ENCODE measurements at regions of chrX and their contacts with region 1.

Region 1: GRCh38 chrX:70444946-70445656 is 466 bp downstream of the DLG3 start:
- DNase-seq: no peak
- H3K4me3 ChIP-seq: no peak overlapping the region
- H3K27ac ChIP-seq: no peak overlapping the region
- H3K4me1 ChIP-seq: no peaks in the 10 kb centered on the region
- H3K27me3 ChIP-seq: no peaks in the 10 kb centered on the region
- CTCF ChIP-seq: no peak
- EP300 ChIP-seq: no peak
- POLR2A ChIP-seq: no peak

Region 2: DNA sequence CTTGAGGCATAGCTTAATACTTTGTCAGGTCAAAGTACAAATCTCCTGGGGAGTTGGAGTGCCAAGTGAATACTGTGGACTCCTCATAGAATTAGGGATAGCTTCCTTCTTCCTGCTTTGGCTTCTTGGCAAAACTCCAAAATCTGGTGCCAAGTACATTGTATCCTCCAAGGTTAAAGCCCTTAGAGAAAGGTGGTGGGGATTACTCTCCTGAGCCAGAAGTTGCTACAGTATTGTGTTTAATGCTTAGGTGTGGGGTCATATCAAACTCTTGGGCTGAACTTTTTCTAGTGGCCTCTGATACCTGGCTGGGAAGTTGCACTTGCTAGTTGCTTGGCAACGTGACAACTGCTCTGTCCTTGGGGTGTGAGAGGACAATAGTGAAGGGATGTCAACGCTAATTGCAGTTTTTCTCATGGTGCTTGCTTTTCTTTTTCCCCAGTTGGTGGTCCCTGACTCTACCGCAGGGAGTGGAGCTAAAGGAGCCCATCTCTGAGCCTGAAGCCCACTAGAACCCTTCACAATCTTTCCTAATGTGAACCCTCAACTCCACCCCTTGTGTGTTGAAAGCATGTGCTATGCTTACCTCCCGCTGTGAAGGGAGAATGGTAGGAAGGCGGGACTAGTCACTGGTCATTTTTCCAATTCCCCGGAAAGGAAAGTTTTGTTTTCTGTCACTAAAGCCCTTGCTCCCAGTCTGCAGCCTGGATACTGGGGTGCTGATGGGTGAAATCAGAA is 35.0 kb after region 1 on chrX:
- intact Hi-C with region 1: loop called in 1 of 4 experiments (anchors 5 kb)
- DNase-seq: peak in 2 of 5 donors; percentile 13 to 29
- H3K4me3 ChIP-seq: no peak overlapping the region
- H3K27ac ChIP-seq: no peak overlapping the region
- H3K4me1 ChIP-seq: peaks cover 4% of the 10 kb centered on the region
- H3K27me3 ChIP-seq: no peaks in the 10 kb centered on the region
- CTCF ChIP-seq: no peak
- EP300 ChIP-seq: no peak
- POLR2A ChIP-seq: no peak

Region 3: GRCh38 chrX:70508296-70508911 is 63.3 kb after region 1 on chrX:
- intact Hi-C with region 1: no loop called
- DNase-seq: no peak
- H3K4me3 ChIP-seq: no peak overlapping the region
- H3K27ac ChIP-seq: no peak overlapping the region
- H3K4me1 ChIP-seq: no peaks in the 10 kb centered on the region
- H3K27me3 ChIP-seq: no peaks in the 10 kb centered on the region
- CTCF ChIP-seq: no peak
- EP300 ChIP-seq: no peak
- POLR2A ChIP-seq: no peak

Measured in ovary (tissue), 10 donors.